SK-N-SH (cell line): ENCODE measurements at regions of chr22 and their contacts with region 1.

Region 1: DNA sequence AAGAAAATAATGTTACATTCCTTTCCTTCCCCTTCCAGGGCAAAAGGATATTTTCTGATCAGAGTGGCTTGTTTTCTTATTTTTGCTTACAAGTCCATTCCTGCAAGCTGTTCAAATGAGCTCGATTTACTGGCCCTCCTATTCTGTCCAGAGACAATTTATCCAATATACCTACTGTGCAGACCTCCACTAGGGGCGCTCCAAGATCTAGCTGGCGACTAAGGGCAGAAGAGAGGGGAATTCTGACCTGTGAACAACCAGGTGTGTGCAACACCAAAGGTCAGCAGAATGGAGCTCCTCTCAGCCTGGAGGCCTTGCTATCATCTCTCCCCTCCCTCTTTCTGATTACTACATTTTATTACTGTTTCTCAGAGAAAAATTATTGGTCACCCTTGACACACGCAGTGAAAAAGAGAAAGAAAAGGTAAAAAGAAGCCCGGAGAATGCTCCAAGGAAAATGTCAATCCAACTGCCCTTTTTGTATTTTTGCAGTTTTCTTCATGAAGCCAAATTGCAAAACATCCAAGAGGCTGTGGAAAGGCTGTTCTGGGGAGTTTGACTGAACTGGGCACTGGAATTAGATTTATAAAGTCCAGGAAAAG is 3.2 kb downstream of the SEZ6L start:
- DNase-seq: peak; percentile 61
- H3K4me3 ChIP-seq: no peak overlapping the region; a peak in 1 of 4 replicates
- H3K27ac ChIP-seq: no peak overlapping the region; a peak in 1 of 4 replicates
- H3K4me1 ChIP-seq: peaks cover 0 to 23% of the 10 kb centered on the region in 2 experiments; a peak in 2 of 4 replicates
- H3K27me3 ChIP-seq: 0 out of 2 replicates have a peak, but pooled peaks cover 7% of the 10 kb centered on the region
- CTCF ChIP-seq: peak; percentile 68
- EP300 ChIP-seq: no peak
- RAD21 ChIP-seq: peak; percentile 64

Region 2: GRCh38 chr22:25525376-25525775 is 647.1 kb before region 1 on chr22:
- CTCF ChIA-PET with region 1: no interaction called
- POLR2A ChIA-PET with region 1: no interaction called
- DNase-seq: no peak
- H3K4me3 ChIP-seq: no peak overlapping the region
- H3K27ac ChIP-seq: no peak overlapping the region
- H3K4me1 ChIP-seq: no peaks in the 10 kb centered on the region
- H3K27me3 ChIP-seq: no peaks in the 10 kb centered on the region
- CTCF ChIP-seq: no peak
- EP300 ChIP-seq: no peak
- RAD21 ChIP-seq: no peak

Region 3: GRCh38 chr22:25777870-25778269 is 394.6 kb before region 1 on chr22:
- CTCF ChIA-PET with region 1: interaction called, 36 read pairs
- POLR2A ChIA-PET with region 1: interaction called, 5 read pairs
- DNase-seq: peak; percentile 74
- H3K4me3 ChIP-seq: no peak overlapping the region
- H3K27ac ChIP-seq: no peak overlapping the region
- H3K4me1 ChIP-seq: peaks cover 0 to 45% of the 10 kb centered on the region in 2 experiments; a peak in 2 of 4 replicates
- H3K27me3 ChIP-seq: no peaks in the 10 kb centered on the region
- CTCF ChIP-seq: peak; percentile 50
- EP300 ChIP-seq: no peak
- RAD21 ChIP-seq: peak; percentile 65

Region 4: GRCh38 chr22:25903294-25903693 is 269.2 kb before region 1 on chr22:
- CTCF ChIA-PET with region 1: interaction called, 14 read pairs
- POLR2A ChIA-PET with region 1: interaction called, 3 read pairs
- DNase-seq: peak; percentile 24
- H3K4me3 ChIP-seq: no peak overlapping the region; a peak in 1 of 4 replicates
- H3K27ac ChIP-seq: no peak overlapping the region
- H3K4me1 ChIP-seq: peaks cover 0 to 9% of the 10 kb centered on the region in 2 experiments; a peak in 1 of 4 replicates
- H3K27me3 ChIP-seq: no peaks in the 10 kb centered on the region
- CTCF ChIP-seq: 0 out of 2 replicates have a peak, but pooled peaks have one; percentile 18
- EP300 ChIP-seq: no peak
- RAD21 ChIP-seq: no peak; the same call in 1 of the 2 replicates

Region 5: GRCh38 chr22:26159886-26160285 is 12.6 kb before region 1 on chr22:
- CTCF ChIA-PET with region 1: interaction called, 11 read pairs
- POLR2A ChIA-PET with region 1: no interaction called
- DNase-seq: no peak
- H3K4me3 ChIP-seq: no peak overlapping the region
- H3K27ac ChIP-seq: no peak overlapping the region
- H3K4me1 ChIP-seq: no peaks in the 10 kb centered on the region; a peak in 1 of 4 replicates
- H3K27me3 ChIP-seq: no peaks in the 10 kb centered on the region
- CTCF ChIP-seq: no peak
- EP300 ChIP-seq: no peak
- RAD21 ChIP-seq: no peak

Region 6: DNA sequence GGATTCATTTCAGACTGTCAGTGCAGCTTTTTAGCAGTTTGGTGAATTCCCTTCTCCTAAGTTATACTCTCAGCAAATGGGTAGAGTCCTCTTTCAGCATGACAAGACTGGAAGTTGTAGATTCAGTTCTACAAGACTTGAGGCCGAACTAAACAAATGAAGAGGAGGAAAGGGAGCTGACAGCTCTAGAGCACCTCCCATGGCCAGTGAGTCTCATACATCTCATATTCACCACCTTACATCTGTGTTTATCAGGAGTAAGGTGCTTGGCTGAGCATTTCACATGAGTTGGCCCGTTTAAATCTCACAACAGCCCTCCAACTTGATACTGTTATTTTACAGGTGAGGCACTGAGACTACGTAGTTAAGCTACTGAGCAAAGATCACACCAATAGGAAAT is 27.2 kb after region 1 on chr22:
- CTCF ChIA-PET with region 1: interaction called, 14 read pairs
- POLR2A ChIA-PET with region 1: no interaction called
- DNase-seq: no peak
- H3K4me3 ChIP-seq: no peak overlapping the region
- H3K27ac ChIP-seq: no peak overlapping the region
- H3K4me1 ChIP-seq: no peaks in the 10 kb centered on the region; a peak in 1 of 4 replicates
- H3K27me3 ChIP-seq: no peaks in the 10 kb centered on the region
- CTCF ChIP-seq: no peak
- EP300 ChIP-seq: no peak
- RAD21 ChIP-seq: no peak

Region 7: DNA sequence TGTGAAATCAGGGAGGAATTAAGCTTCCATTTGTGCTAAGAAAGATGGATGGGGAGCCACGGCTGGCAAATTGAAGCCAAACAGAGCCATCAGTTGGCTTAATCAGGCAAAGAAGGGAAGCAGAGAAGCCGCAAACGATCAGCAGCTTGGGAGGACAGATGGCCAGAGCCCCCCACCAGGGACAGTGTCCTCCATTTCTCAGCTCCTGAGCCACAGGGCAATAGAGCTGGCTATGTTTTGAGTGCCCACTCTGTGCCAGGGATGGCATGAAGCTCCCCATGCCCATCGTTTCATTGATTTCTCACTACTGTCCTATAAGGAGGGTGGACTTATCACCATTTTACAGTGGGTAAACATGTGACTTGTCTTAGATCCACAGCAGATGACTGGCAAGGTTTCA is 130.2 kb after region 1 on chr22:
- CTCF ChIA-PET with region 1: interaction called, 14 read pairs
- POLR2A ChIA-PET with region 1: no interaction called
- DNase-seq: no peak
- H3K4me3 ChIP-seq: no peak overlapping the region
- H3K27ac ChIP-seq: no peak overlapping the region
- H3K4me1 ChIP-seq: peaks cover 0 to 3% of the 10 kb centered on the region in 2 experiments; a peak in 1 of 4 replicates
- H3K27me3 ChIP-seq: no peaks in the 10 kb centered on the region
- CTCF ChIP-seq: no peak
- EP300 ChIP-seq: no peak
- RAD21 ChIP-seq: no peak

Region 8: DNA sequence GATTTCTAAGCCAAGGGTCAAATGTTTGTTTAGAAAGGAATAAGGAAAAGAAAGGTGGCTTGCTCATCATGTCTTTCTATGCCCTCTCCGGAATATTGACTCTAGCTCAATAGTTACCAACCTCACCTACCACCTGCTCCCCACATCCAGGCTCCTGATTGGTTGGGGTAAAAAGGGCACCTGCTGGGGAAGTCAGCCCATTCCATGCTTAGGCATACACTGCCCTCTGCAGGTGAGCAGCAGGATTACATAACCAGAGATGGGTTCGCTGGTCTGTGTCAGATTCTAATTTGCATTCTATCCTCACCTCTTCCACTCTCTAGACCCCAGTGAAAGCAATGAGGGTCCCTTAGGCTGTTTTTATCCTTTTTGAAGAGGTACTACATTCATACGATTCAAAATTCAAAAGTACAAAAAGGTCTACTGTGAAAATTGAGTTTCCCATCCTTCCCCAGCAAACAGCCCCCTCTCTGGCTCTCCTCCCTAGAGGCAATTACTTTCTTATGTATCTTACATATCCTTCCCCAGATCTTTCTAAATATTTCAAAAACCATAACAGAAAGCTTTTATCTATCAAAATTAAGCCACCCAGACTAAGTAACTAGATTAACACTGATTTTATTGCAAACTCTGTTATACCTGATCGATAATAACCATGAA is 158.6 kb after region 1 on chr22:
- CTCF ChIA-PET with region 1: interaction called, 133 read pairs
- POLR2A ChIA-PET with region 1: interaction called, 4 read pairs
- DNase-seq: peak; percentile 81
- H3K4me3 ChIP-seq: no peak overlapping the region; a peak in 1 of 4 replicates
- H3K27ac ChIP-seq: no peak overlapping the region
- H3K4me1 ChIP-seq: peaks cover 0 to 3% of the 10 kb centered on the region in 2 experiments; a peak in 1 of 4 replicates
- H3K27me3 ChIP-seq: no peaks in the 10 kb centered on the region
- CTCF ChIP-seq: peak; percentile 85
- EP300 ChIP-seq: no peak
- RAD21 ChIP-seq: peak; percentile 96